ENCODE measurements at regions of chr21 and their contacts with region 1.

Region 1: GRCh38 chr21:32257962-32258785 is 20.7 kb downstream of the MIS18A start:
- DNase-seq: no peak
- H3K4me3 ChIP-seq: no peak overlapping the region
- H3K27me3 ChIP-seq: no peaks in the 10 kb centered on the region; the same call in 1 of the 2 replicates
- CTCF ChIP-seq: peak; percentile 78

Region 2: GRCh38 chr21:31725202-31725839 is 532.9 kb before region 1 on chr21:
- CTCF ChIA-PET with region 1: no interaction called
- POLR2A ChIA-PET with region 1: no interaction called
- DNase-seq: no peak
- H3K4me3 ChIP-seq: no peak overlapping the region
- H3K27me3 ChIP-seq: no peaks in the 10 kb centered on the region
- CTCF ChIP-seq: no peak

Region 3: GRCh38 chr21:31786164-31786920 is 471.8 kb before region 1 on chr21:
- CTCF ChIA-PET with region 1: interaction called, 37 read pairs
- POLR2A ChIA-PET with region 1: no interaction called
- DNase-seq: no peak
- H3K4me3 ChIP-seq: no peak overlapping the region
- H3K27me3 ChIP-seq: no peaks in the 10 kb centered on the region; the same call in 1 of the 2 replicates
- CTCF ChIP-seq: no peak

Region 4: GRCh38 chr21:31866077-31866511 is 392.1 kb before region 1 on chr21:
- CTCF ChIA-PET with region 1: interaction called, 85 read pairs
- POLR2A ChIA-PET with region 1: no interaction called
- DNase-seq: no peak
- H3K4me3 ChIP-seq: no peak overlapping the region
- H3K27me3 ChIP-seq: peaks cover 7% of the 10 kb centered on the region
- CTCF ChIP-seq: peak; percentile 91

Region 5: GRCh38 chr21:31873696-31874599 is 384.2 kb before region 1 on chr21:
- CTCF ChIA-PET with region 1: interaction called, 16 read pairs
- POLR2A ChIA-PET with region 1: no interaction called
- DNase-seq: no peak
- H3K4me3 ChIP-seq: peak overlapping the region; percentile 61
- H3K27me3 ChIP-seq: peaks cover 19% of the 10 kb centered on the region
- CTCF ChIP-seq: peak; percentile 62

Region 6: DNA sequence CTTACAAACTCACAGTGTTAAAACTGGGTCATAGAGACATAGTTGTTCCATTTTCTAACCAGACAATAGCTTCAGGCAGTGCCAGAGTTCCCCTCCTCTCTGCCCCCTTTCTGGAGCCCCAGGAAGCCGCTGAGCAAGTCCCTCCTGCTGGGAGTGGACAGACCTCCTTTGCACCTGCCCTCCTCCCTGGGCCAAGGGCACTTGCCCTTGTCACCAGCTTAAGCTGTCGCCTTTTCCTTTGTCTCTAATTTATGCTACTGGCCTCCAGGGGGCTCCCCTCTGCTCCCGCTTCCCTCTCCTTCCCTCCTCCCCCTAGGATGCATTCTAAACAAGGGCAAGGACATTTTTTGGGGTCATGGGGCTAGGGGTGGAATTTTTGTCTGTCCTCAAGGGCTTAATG is 161.8 kb before region 1 on chr21:
- CTCF ChIA-PET with region 1: interaction called, 12 read pairs
- POLR2A ChIA-PET with region 1: no interaction called
- DNase-seq: no peak
- H3K4me3 ChIP-seq: no peak overlapping the region
- H3K27me3 ChIP-seq: no peaks in the 10 kb centered on the region
- CTCF ChIP-seq: peak; percentile 34; the same call in 1 of the 2 replicates

Region 7: GRCh38 chr21:32270748-32271147 is 12.6 kb after region 1 on chr21:
- CTCF ChIA-PET with region 1: interaction called, 11 read pairs
- POLR2A ChIA-PET with region 1: no interaction called
- DNase-seq: no peak
- H3K4me3 ChIP-seq: no peak overlapping the region
- H3K27me3 ChIP-seq: no peaks in the 10 kb centered on the region
- CTCF ChIP-seq: no peak

Region 8: DNA sequence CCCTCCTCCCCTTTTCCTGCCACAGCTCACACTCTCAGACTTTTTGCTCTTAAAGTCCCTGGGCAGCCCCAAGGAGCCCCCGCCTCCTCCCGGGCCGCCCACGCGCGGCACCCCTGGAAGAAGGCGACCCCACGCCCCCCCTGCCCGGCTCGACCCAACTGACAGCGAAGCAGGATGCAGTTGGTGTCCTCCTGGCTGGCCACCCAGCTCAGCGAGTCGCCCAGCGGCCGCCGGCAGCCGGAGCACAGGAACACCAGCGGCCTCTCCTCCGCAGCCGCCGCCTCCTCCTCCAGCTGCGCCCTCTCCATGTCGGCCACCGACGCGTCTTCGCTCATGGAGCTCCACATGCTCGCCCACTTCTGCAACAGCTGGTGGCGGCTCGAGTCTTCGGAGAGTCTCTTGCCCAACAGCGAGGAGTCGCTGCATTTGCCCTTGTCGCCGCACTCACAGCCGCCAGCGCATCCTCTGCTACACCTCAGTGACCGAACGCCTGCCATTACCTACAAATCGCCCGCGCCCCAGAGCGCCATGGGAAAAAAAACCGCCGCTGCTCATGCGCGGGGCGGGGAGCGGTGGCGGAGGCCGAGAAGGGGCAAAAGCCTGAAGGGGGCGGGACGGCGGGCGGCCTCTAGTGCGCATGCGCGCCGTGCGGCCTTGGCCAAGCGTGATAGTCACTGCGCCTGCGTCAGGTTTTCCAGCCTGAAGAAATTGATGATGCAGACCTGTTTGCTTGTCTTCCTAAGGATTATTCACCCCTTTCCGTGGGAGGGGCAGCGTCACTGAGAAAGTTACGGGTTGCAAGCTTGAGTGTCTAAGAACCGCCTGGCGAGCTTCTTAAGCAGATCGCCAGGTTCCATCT is 20.6 kb after region 1 on chr21 and contains the start of gene MIS18A:
- CTCF ChIA-PET with region 1: interaction called, 10 read pairs
- POLR2A ChIA-PET with region 1: no interaction called
- DNase-seq: peak; percentile 76
- H3K4me3 ChIP-seq: peak within 1 kb of the TSS; percentile 98
- H3K27me3 ChIP-seq: no peaks in the 10 kb centered on the region
- CTCF ChIP-seq: 0 out of 2 replicates have a peak, but pooled peaks have one; percentile 1
- polyA plus RNA-seq, gene MIS18A: 6.0 and 7.2 TPM in 2 replicates

Region 9: DNA sequence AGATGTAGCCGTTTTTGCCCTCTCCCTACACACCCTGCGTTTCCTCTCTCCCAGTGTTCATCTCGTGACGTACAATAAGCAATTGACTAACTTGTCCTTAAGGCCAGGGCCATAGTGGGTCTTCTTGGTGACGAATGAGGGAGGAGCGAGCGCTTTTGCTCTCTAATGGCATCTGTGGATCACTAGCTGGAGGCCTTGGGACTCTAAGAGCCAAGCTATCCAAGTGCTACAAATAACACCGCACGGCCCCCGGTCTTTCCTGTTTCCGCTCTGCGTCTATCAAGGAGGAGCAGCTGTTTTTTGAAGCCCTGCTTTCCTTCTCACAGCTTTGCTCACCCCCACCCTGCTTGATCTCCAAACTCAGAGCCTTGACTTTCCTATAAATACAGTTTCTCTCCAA is 179.6 kb after region 1 on chr21:
- CTCF ChIA-PET with region 1: no interaction called
- POLR2A ChIA-PET with region 1: no interaction called
- DNase-seq: no peak
- H3K4me3 ChIP-seq: no peak overlapping the region
- H3K27me3 ChIP-seq: no peaks in the 10 kb centered on the region
- CTCF ChIP-seq: no peak